Activated naive CD4-positive, alpha-beta T cell treated with anti-CD3 and anti-CD28 coated beads for 36 hours (primary cell): ENCODE measurements at regions of chr6 and their contacts with region 1.

Region 1: DNA sequence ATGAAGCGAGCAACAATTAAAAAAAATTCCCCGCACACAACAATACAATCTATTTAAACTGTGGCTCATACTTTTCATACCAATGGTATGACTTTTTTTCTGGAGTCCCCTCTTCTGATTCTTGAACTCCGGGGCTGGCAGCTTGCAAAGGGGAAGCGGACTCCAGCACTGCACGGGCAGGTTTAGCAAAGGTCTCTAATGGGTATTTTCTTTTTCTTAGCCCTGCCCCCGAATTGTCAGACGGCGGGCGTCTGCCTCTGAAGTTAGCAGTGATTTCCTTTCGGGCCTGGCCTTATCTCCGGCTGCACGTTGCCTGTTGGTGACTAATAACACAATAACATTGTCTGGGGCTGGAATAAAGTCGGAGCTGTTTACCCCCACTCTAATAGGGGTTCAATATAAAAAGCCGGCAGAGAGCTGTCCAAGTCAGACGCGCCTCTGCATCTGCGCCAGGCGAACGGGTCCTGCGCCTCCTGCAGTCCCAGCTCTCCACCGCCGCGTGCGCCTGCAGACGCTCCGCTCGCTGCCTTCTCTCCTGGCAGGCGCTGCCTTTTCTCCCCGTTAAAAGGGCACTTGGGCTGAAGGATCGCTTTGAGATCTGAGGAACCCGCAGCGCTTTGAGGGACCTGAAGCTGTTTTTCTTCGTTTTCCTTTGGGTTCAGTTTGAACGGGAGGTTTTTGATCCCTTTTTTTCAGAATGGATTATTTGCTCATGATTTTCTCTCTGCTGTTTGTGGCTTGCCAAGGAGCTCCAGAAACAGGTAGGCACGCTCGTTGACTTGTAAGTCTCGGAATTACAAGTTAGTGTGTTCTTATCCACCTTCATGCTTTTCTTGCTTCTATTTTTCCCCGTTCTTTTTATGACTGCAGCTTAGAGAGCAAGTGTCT is at the start of gene EDN1:
- DNase-seq: peak; percentile 76
- H3K4me3 Mint-ChIP-seq: peak within 1 kb of the TSS; percentile 79
- H3K27ac Mint-ChIP-seq: no peak within 1 kb of the TSS
- H3K4me1 Mint-ChIP-seq: peaks cover 14% of the 10 kb centered on the region
- H3K27me3 Mint-ChIP-seq: peaks cover 26% of the 10 kb centered on the region
- total RNA-seq, gene EDN1: 0.15 to 0.24 TPM

Region 2: DNA sequence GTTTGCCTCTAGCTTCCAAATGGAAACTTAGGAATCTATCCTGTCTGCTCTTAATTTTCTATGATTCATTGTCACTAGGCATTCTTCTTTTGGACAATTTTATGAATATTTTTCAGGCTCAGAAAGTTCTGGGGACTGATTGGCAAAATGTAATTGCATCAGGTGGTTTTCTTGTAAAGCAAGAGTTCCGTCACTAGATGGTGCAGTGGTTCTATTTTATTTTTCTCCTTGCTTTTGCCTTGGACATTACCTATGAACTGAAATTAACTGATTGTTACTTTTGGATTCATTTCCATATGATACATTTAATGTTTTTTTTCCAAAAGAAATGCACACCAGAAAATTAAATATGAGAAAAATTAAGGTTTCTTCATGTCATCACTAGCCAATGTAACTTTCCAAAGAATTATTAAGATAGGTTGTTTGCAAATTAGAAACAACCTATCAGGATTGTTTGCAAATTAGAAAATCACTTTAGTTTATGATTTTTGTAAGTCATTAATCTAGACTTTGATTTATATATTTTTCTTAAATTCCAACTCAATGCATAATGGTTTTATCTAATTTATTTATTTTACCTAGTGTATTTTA is 704.7 kb before region 1 on chr6:
- CTCF ChIA-PET with region 1: interaction called, 3 read pairs
- intact Hi-C with region 1: loop called (anchors 1 kb)
- DNase-seq: peak; percentile 14
- H3K4me3 Mint-ChIP-seq: no peak overlapping the region
- H3K27ac Mint-ChIP-seq: no peak overlapping the region
- H3K4me1 Mint-ChIP-seq: no peaks in the 10 kb centered on the region
- H3K27me3 Mint-ChIP-seq: no peaks in the 10 kb centered on the region

Region 3: DNA sequence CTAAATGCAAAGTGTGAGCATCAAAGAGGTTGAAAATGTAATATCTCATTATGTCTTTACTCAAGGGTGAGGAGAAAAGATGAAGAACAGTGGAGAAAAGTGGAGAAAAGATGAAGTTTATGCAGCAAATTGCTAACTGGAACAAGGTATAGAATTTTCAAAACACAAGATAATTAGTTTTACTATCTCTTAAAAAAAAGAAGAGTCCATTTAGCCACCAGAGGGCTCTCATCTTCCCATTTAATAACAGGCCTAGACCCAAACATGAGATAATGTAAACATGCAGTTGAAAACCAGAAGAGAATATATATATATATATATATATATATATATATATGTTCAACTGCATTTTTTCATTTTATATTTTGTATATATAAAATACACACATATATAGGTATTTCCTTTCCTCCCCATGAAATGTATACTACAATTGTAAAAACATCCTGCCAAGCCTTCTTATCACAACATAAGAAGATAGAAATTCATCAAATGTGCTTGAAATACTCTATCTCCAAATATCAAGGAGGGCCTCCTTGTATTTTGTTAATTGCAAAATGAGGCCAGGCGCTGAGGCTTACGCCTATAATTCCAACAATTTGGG is 590.0 kb before region 1 on chr6:
- CTCF ChIA-PET with region 1: interaction called, 4 read pairs
- intact Hi-C with region 1: loop called (anchors 2 kb)
- DNase-seq: no peak
- H3K4me3 Mint-ChIP-seq: no peak overlapping the region
- H3K27ac Mint-ChIP-seq: no peak overlapping the region
- H3K4me1 Mint-ChIP-seq: peaks cover 28% of the 10 kb centered on the region
- H3K27me3 Mint-ChIP-seq: no peaks in the 10 kb centered on the region

Region 4: GRCh38 chr6:12150812-12151432 is 139.3 kb before region 1 on chr6:
- CTCF ChIA-PET with region 1: no interaction called
- intact Hi-C with region 1: loop called (anchors 1 kb)
- DNase-seq: peak; percentile 55
- H3K4me3 Mint-ChIP-seq: no peak overlapping the region
- H3K27ac Mint-ChIP-seq: no peak overlapping the region
- H3K4me1 Mint-ChIP-seq: peaks cover 16% of the 10 kb centered on the region
- H3K27me3 Mint-ChIP-seq: no peaks in the 10 kb centered on the region

Region 5: GRCh38 chr6:12605888-12606345 is 315.7 kb after region 1 on chr6:
- CTCF ChIA-PET with region 1: interaction called, 6 read pairs
- intact Hi-C with region 1: loop called (anchors 1 kb)
- DNase-seq: peak; percentile 67
- H3K4me3 Mint-ChIP-seq: no peak overlapping the region
- H3K27ac Mint-ChIP-seq: no peak overlapping the region
- H3K4me1 Mint-ChIP-seq: peaks cover 11% of the 10 kb centered on the region
- H3K27me3 Mint-ChIP-seq: peaks cover 24% of the 10 kb centered on the region